Natural killer cell (primary cell): ENCODE measurements at regions of chr19 and their contacts with region 1.

Region 1: DNA sequence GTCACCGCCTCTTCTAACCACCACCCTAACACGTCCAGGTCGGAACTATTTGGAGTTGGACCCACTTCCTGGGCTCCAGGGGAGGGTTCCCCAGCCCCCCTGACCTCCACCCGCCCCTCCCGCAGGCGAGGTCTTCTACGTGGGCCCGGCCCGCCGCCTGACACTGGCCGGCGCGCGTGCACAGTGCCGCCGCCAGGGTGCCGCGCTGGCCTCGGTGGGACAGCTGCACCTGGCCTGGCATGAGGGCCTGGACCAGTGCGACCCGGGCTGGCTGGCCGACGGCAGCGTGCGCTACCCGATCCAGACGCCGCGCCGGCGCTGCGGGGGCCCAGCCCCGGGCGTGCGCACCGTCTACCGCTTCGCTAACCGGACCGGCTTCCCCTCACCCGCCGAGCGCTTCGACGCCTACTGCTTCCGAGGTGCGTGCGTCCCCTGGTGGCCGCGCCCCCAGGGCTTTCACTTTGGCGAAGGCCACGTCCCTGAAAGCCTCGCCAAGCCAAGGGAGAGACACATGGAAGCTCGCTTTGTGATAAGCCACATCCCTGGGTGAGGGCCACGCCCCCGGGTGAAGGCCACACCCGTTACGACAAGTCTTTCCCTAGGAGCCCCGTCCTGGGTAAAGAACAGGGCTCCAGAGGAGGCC is 13.2 kb downstream of the NCAN start:
- DNase-seq: peak; percentile 65 to 88
- ATAC-seq: peak; percentile 83 to 98 (median 95)
- H3K4me3 ChIP-seq: peak overlapping the region; percentile 25
- H3K4me3 Mint-ChIP-seq: peak overlapping the region; percentile 83
- H3K27ac ChIP-seq: no peak overlapping the region
- H3K27ac Mint-ChIP-seq: no peak overlapping the region
- H3K4me1 ChIP-seq: peaks cover 10% of the 10 kb centered on the region
- H3K4me1 Mint-ChIP-seq: peaks cover 4 to 12% of the 10 kb centered on the region in 2 donors
- H3K27me3 ChIP-seq: peaks cover 5% of the 10 kb centered on the region
- H3K27me3 Mint-ChIP-seq: peaks cover 0 to 3% of the 10 kb centered on the region in 2 donors
- CTCF ChIP-seq: peak; percentile 76

Region 2: DNA sequence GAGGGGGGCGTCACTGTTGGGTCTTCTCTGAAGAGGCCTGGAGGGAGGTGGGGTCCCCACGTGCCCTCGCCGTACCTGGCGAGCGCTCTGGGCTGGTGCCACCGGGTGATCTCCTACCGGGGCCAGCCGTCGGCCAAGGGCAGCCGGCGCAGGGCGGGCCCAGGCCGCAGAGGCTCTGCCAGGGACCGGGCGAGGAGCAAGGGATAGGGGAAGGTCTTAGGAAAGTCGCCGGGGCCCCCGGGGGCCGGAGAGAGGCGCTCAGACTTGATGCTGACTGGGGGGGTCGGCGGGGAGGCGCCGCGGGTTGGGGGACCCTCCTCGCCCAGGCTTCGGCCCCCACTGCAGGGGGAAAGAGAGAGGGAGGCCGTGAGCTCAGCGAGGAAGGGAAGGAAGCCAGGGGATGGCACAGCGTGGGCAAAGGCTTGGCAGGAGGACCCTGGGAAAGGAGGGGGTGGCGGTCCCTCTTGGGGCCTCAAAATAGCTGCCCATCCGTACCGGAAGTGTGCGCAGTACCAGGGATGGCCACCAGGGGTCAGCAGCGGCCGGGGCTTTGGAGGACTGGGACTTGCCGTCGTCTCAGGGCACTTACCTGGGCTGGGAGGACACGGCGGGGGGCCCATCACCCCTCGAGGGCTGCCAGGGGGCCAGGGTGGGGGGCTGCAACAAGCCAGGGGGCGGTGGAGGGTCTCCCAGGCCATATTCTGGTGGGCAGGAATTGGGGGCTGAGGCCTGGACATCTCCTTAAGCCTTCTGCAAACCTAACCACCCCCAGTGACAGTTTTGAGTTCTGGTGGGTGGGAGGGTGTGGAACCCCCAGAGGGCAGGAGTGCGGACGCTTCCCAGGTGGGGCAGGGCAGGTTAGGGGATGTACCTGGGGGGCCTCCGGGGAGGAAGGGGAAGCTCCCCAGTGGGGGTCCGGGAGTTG is 79.0 kb before region 1 on chr19:
- intact Hi-C with region 1: loop called (anchors 2 kb)
- DNase-seq: peak; percentile 84 to 88
- ATAC-seq: peak; percentile 85 to 99 (median 94)
- H3K4me3 ChIP-seq: no peak overlapping the region
- H3K4me3 Mint-ChIP-seq: no peak overlapping the region
- H3K27ac ChIP-seq: no peak overlapping the region
- H3K27ac Mint-ChIP-seq: peak overlapping the region in 1 of 2 donors; percentile 38
- H3K4me1 ChIP-seq: peaks cover 8% of the 10 kb centered on the region
- H3K4me1 Mint-ChIP-seq: peaks cover 0 to 5% of the 10 kb centered on the region in 2 donors
- H3K27me3 ChIP-seq: no peaks in the 10 kb centered on the region
- H3K27me3 Mint-ChIP-seq: no peaks in the 10 kb centered on the region
- CTCF ChIP-seq: peak; percentile 77

Region 3: DNA sequence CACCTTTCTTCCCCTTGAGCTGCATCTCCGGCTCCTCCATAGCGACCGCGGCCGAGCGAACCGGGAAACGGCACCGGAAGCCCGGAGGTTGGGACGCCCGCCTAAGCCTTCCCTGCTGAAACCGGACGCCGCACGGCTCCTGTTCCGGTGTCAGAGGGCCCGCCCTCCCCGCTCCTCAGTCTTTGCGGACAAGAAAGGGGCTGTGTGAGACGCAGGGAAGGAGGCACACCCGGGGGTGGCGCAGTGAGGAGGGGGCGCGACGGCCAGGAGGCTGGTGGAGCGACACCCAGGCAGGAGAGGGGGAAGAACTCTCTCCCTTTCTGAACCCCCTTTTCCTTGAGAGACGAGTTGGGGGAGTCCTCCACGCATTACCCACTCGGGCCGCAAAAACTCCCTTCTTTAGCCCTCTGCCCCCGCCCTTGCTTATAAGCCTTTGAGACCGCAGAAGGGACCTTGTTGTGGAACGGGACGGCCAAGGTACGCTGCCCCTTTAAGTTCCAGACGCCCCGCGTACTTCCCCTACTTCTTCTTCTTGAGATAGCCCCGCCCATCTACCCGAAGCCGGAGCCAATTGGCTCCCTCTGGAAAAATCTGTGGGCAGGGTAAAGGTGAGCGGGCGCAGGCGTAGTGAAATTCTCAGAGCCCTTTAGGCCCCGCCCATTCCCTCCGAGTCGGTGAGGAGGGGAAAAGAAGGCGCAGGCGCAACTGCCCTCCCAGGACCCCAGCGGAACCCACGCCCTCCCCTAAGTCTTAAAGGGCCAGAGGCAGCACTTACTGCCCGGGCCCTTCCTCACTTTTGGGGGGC is 32.7 kb before region 1 on chr19 and contains the starts of genes BORCS8 and RFXANK:
- intact Hi-C with region 1: no loop called
- DNase-seq: peak; percentile 96 to 100
- ATAC-seq: peak; percentile 88 to 97 (median 89)
- H3K4me3 ChIP-seq: peak within 1 kb of the TSS; percentile 73
- H3K4me3 Mint-ChIP-seq: peak within 1 kb of the TSS; percentile 98
- H3K27ac ChIP-seq: peak within 1 kb of the TSS; percentile 94
- H3K27ac Mint-ChIP-seq: peak within 1 kb of the TSS; percentile 96
- H3K4me1 ChIP-seq: peaks cover 39% of the 10 kb centered on the region
- H3K4me1 Mint-ChIP-seq: peaks cover 25 to 49% of the 10 kb centered on the region in 2 donors
- H3K27me3 ChIP-seq: no peaks in the 10 kb centered on the region
- H3K27me3 Mint-ChIP-seq: no peaks in the 10 kb centered on the region
- CTCF ChIP-seq: no peak
- total RNA-seq, gene BORCS8: 28.2 to 42.4 (median 33.2) TPM
- total RNA-seq, gene RFXANK: 50.1 to 67.5 (median 66.0) TPM

Region 4: DNA sequence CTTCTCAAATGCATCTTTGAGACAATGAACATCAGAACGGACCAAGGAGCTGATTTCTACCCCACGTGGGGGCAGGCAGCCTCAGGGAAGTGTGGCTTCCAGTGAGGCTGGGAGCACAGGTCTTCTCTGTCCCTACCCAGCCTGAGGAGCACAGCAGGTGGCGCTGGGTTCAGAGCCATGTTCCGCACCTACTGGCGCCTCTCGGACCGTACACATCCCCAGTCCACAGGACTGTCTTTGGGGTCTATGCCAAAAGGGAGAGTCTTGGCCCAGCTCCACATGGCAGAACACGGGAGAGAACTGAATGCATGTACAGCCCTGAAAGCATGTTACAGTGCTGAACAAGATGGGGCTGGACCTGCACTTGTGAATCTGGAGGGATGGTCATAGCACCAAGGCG is 72.8 kb after region 1 on chr19:
- intact Hi-C with region 1: no loop called
- DNase-seq: no peak
- ATAC-seq: no peak
- H3K4me3 ChIP-seq: no peak overlapping the region
- H3K4me3 Mint-ChIP-seq: no peak overlapping the region
- H3K27ac ChIP-seq: no peak overlapping the region
- H3K27ac Mint-ChIP-seq: no peak overlapping the region
- H3K4me1 ChIP-seq: no peaks in the 10 kb centered on the region
- H3K4me1 Mint-ChIP-seq: no peaks in the 10 kb centered on the region
- H3K27me3 ChIP-seq: no peaks in the 10 kb centered on the region
- H3K27me3 Mint-ChIP-seq: no peaks in the 10 kb centered on the region
- CTCF ChIP-seq: no peak